PC-9 (cell line): ENCODE measurements at regions of chr1 and their contacts with region 1.

Region 1: DNA sequence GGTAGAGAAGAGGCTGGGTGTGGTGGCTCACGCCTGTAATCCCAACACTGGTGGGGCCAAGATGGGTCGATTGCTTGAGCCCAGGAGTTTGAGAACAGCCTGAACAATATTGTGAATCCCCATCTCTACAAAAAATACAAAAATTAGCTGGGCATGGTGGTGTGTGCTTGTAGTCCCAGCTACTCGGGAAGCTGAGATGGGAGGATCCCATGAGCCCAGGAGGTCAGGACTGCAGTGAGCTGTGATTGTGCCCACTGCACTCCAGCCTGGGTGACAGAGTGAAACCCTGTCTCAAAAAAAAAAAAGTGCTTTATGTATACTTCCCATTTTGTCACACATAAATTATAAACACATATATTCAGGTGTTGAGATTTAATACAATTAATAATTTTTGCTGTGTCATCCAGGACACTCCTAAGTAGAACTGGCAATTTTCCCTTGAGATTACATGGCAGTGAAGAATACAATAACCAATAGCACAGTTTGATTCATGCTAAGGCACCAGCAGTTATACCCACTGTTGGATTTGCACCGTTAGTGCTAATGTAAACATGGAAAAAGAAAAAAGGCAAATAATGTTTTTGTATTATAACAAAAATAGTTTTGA is 15.5 kb downstream of the GABPB2 start:
- DNase-seq: no peak
- H3K4me3 ChIP-seq: no peak overlapping the region
- H3K27ac ChIP-seq: peak overlapping the region; percentile 37; the same call in 1 of the 2 replicates
- H3K4me1 ChIP-seq: no peaks in the 10 kb centered on the region
- H3K27me3 ChIP-seq: no peaks in the 10 kb centered on the region
- CTCF ChIP-seq: no peak

Region 2: DNA sequence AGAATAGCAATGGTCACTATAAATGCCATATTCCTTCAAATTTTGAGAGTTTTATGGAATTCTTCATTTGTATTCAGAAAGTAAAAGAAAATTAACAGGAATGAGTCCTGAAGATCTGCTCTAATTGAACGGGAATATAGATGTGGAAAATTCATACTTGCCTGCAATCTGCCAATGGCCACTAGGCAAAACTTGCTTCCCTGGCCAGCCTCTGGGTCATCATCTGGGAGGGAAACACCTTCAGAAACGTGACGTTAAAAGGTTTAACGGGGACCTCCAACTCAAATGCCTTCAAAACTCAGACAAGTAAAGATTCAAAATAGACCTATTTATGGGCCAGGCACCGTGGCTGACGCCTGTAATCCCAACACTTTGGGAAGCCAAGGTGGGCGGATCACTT is 256.3 kb before region 1 on chr1:
- CTCF ChIA-PET with region 1: no interaction called
- POLR2A ChIA-PET with region 1: no interaction called
- intact Hi-C with region 1: no loop called
- DNase-seq: no peak
- H3K4me3 ChIP-seq: no peak overlapping the region
- H3K27ac ChIP-seq: no peak overlapping the region
- H3K4me1 ChIP-seq: no peaks in the 10 kb centered on the region
- H3K27me3 ChIP-seq: no peaks in the 10 kb centered on the region
- CTCF ChIP-seq: peak; percentile 46; the same call in 1 of the 2 replicates

Region 3: GRCh38 chr1:151013518-151013917 is 72.5 kb before region 1 on chr1:
- CTCF ChIA-PET with region 1: interaction called, 11 read pairs
- POLR2A ChIA-PET with region 1: no interaction called
- intact Hi-C with region 1: no loop called
- DNase-seq: no peak
- H3K4me3 ChIP-seq: no peak overlapping the region
- H3K27ac ChIP-seq: no peak overlapping the region
- H3K4me1 ChIP-seq: peaks cover 7% of the 10 kb centered on the region; the same call in 1 of the 2 replicates
- H3K27me3 ChIP-seq: no peaks in the 10 kb centered on the region
- CTCF ChIP-seq: no peak